Activated naive CD4-positive, alpha-beta T cell treated with anti-CD3 and anti-CD28 coated beads for 36 hours (primary cell): ENCODE measurements at regions of chr1 and their contacts with region 1.

Region 1: GRCh38 chr1:61453111-61453961 is 271.6 kb downstream of the TM2D1 start:
- DNase-seq: peak; percentile 86
- H3K4me3 Mint-ChIP-seq: no peak overlapping the region
- H3K27ac Mint-ChIP-seq: no peak overlapping the region
- H3K4me1 Mint-ChIP-seq: peaks cover 9% of the 10 kb centered on the region
- H3K27me3 Mint-ChIP-seq: no peaks in the 10 kb centered on the region

Region 2: GRCh38 chr1:59971464-59971911 is 1481.8 kb before region 1 on chr1:
- CTCF ChIA-PET with region 1: no interaction called
- intact Hi-C with region 1: loop called (anchors 5 kb)
- DNase-seq: peak; percentile 60
- H3K4me3 Mint-ChIP-seq: no peak overlapping the region
- H3K27ac Mint-ChIP-seq: no peak overlapping the region
- H3K4me1 Mint-ChIP-seq: peaks cover 3% of the 10 kb centered on the region
- H3K27me3 Mint-ChIP-seq: peaks cover 22% of the 10 kb centered on the region

Region 3: GRCh38 chr1:60978421-60979357 is 474.6 kb before region 1 on chr1:
- CTCF ChIA-PET with region 1: no interaction called
- intact Hi-C with region 1: loop called (anchors 1 kb)
- DNase-seq: peak; percentile 57
- H3K4me3 Mint-ChIP-seq: no peak overlapping the region
- H3K27ac Mint-ChIP-seq: no peak overlapping the region
- H3K4me1 Mint-ChIP-seq: peaks cover 2% of the 10 kb centered on the region
- H3K27me3 Mint-ChIP-seq: no peaks in the 10 kb centered on the region

Region 4: GRCh38 chr1:61049850-61050540 is 403.3 kb before region 1 on chr1:
- CTCF ChIA-PET with region 1: interaction called, 16 read pairs
- intact Hi-C with region 1: loop called (anchors 1 kb)
- DNase-seq: peak; percentile 93
- H3K4me3 Mint-ChIP-seq: peak overlapping the region; percentile 74
- H3K27ac Mint-ChIP-seq: no peak overlapping the region
- H3K4me1 Mint-ChIP-seq: peaks cover 28% of the 10 kb centered on the region
- H3K27me3 Mint-ChIP-seq: peaks cover 42% of the 10 kb centered on the region

Region 5: DNA sequence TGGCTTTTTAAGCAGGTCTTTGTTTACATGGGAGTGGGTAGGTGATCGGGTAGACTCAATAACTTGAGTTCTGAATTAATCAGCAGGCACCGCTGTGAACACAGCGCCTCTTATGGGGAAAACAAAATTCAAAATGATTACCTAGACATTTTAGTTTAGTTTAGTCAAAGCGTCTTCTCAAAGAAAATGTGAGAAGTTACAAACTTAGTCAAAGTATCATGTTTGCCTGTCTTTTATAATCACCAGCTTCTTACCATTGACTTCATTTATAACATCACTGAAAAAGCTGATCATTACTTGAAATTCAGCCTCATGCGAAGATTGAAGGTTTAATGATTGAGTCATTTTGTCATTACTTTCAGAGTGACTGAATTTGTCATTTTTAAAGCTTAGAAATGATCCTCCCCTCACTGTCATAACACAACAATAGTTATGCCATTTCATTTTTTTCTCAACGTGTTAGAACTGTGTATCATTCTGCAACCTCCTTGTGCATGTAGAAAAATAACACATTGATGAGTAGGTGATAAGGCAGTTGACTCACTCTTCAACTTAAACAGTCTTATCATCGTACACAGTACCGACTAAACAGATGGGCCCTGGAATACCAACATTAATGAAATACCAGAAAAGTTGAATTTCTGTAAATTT is 182.4 kb before region 1 on chr1:
- CTCF ChIA-PET with region 1: no interaction called
- intact Hi-C with region 1: loop called (anchors 10 kb)
- DNase-seq: peak; percentile 24
- H3K4me3 Mint-ChIP-seq: no peak overlapping the region
- H3K27ac Mint-ChIP-seq: peak overlapping the region; percentile 37
- H3K4me1 Mint-ChIP-seq: peaks cover 18% of the 10 kb centered on the region
- H3K27me3 Mint-ChIP-seq: peaks cover 7% of the 10 kb centered on the region

Region 6: GRCh38 chr1:61436016-61436415 is 17.3 kb before region 1 on chr1:
- CTCF ChIA-PET with region 1: no interaction called
- intact Hi-C with region 1: no loop called
- DNase-seq: peak; percentile 7
- H3K4me3 Mint-ChIP-seq: no peak overlapping the region
- H3K27ac Mint-ChIP-seq: no peak overlapping the region
- H3K4me1 Mint-ChIP-seq: no peaks in the 10 kb centered on the region
- H3K27me3 Mint-ChIP-seq: no peaks in the 10 kb centered on the region

Region 7: GRCh38 chr1:61588736-61589672 is 135.7 kb after region 1 on chr1:
- CTCF ChIA-PET with region 1: interaction called, 5 read pairs
- intact Hi-C with region 1: loop called (anchors 2 kb)
- DNase-seq: peak; percentile 79
- H3K4me3 Mint-ChIP-seq: no peak overlapping the region
- H3K27ac Mint-ChIP-seq: no peak overlapping the region
- H3K4me1 Mint-ChIP-seq: no peaks in the 10 kb centered on the region
- H3K27me3 Mint-ChIP-seq: peaks cover 4% of the 10 kb centered on the region

Region 8: DNA sequence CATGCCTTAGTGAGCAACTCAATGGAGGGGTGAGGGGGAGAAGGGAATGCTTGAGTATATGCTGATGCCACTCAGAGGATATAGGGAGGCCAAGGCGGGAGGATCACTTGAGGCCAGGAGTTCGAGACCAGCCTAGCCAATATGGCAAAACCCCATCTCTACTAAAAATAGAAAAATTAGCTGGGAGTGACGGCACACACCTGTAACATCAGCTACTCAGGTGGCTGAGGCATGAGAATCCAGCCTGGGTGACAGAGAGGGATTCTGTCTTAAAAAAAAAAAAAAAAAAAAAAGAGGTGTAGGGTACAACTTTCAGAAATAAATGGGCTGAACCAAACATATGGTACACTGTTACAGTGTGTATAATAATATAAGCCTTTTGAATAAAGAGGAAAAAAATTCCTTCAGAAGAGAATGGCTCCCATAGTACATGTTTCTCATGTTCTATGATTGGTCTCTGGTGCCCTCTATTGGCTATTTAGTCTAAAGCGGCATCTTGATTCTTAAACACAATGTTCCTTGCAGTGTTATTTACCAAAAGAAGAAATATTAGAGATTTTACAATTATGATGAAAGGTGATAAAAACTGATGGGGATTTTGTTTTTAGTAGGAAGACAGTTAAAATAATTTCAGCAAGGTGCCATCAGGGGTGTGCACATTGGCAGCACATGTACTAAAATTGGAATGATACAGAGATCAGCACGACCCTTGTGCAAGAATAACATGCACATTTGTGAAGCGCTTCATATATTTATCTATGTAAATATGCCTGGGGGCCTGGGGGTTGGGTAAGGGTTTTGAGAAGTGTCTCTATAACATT is 398.7 kb after region 1 on chr1:
- CTCF ChIA-PET with region 1: interaction called, 3 read pairs
- intact Hi-C with region 1: loop called (anchors 2 kb)
- DNase-seq: peak; percentile 11
- H3K4me3 Mint-ChIP-seq: no peak overlapping the region
- H3K27ac Mint-ChIP-seq: no peak overlapping the region
- H3K4me1 Mint-ChIP-seq: no peaks in the 10 kb centered on the region
- H3K27me3 Mint-ChIP-seq: no peaks in the 10 kb centered on the region